ENCODE measurements at regions of chr11 and their contacts with region 1.

Region 1: DNA sequence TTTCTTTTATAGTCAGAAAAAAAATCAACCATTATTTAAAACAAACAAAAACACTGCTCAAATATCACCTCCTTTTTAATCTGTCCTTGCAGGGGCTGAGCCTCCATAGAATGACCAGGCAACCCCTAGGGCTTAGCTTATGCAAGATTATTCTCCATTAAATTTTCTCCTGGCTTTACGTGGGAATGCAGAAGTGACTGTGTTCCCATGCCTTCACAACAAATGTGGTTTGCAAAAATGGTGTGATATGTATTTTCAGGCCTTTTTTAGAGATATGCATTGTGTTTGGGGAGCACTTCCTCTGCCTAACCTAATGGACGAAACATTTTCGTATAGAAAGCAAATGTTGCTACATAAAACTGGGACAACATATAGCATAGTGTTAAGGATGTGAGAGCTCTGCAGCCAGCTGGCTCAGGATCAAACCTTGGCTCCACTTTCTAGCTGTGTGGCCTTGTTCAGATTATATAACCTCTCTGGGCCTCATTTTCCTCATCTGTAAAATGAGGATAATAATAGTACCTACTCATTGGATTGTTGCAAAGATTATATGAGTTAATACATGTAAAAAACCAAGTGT is 82.6 kb downstream of the PARVA start:
- DNase-seq: no peak
- ATAC-seq: no peak
- H3K4me3 ChIP-seq: no peak overlapping the region
- H3K27ac ChIP-seq: no peak overlapping the region
- H3K4me1 ChIP-seq: no peaks in the 10 kb centered on the region
- H3K27me3 ChIP-seq: no peaks in the 10 kb centered on the region
- CTCF ChIP-seq: no peak

Region 2: GRCh38 chr11:12434325-12434654 is 25.7 kb before region 1 on chr11:
- CTCF ChIA-PET with region 1: no interaction called
- POLR2A ChIA-PET with region 1: no interaction called
- in situ Hi-C with region 1: no loop called
- intact Hi-C with region 1: no loop called
- DNase-seq: no peak
- ATAC-seq: no peak
- H3K4me3 ChIP-seq: no peak overlapping the region
- H3K27ac ChIP-seq: no peak overlapping the region
- H3K4me1 ChIP-seq: no peaks in the 10 kb centered on the region
- H3K27me3 ChIP-seq: no peaks in the 10 kb centered on the region
- CTCF ChIP-seq: no peak

Region 3: DNA sequence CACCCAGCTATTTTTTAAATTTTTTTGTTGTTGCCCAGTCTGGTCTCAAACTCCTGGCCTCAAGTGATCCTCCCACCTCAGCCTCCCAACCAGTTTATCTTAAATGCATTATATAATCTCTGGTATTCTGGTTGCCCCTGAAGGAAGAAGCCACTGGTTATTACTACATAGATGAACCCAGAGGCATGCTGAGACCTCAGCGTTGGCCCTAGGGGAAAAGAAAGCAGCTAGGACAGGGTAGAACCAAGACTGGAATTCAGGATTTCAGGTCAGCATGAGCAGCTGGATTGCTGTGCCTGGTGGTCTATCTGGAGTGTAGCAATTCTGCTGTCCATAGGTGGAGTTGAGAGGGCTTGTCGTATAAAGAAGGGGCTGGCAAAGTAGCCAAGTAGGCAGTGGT is 15.4 kb before region 1 on chr11:
- CTCF ChIA-PET with region 1: interaction called, 7 read pairs
- POLR2A ChIA-PET with region 1: interaction called, 3 read pairs
- in situ Hi-C with region 1: no loop called
- intact Hi-C with region 1: loop called (anchors 2 kb)
- DNase-seq: no peak
- ATAC-seq: no peak
- H3K4me3 ChIP-seq: no peak overlapping the region
- H3K27ac ChIP-seq: no peak overlapping the region
- H3K4me1 ChIP-seq: no peaks in the 10 kb centered on the region
- H3K27me3 ChIP-seq: no peaks in the 10 kb centered on the region
- CTCF ChIP-seq: no peak

Measured in Panc1 (cell line).